Mucosa of descending colon (tissue), 3 donors: ENCODE measurements at regions of chr13 and their contacts with region 1.

Region 1: DNA sequence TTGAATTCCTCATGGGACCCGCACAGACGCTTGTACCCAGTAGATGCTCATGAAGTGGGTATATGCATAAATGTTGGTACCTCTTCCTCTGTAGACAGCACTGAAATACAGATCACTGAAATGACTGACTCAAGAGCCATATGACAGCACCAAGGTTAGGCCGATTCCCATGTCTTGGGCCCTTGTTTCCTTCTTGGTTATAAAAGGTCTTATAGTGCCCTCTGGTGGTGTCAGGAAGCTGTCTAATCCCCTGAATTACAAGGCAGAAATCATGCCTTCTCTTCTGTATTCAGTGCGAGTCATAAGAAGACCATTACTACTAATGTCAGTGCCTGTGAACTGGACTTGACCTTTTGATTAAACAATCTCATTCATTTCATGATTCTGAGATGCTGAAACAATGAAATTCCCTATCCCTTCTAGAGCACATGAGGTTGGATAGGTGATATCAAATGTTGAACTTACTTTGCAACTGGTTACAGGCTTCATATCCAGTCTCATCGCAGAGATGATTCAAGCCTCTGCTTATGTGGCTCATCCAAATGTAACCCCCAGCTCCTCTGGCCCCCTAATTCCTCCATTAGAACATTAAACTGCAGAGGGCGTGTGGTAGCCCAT is 59.7 kb downstream of the SPATA13 start:
- DNase-seq: peak in 1 of 3 donors; percentile 89
- ATAC-seq: peak; percentile 76
- H3K4me3 ChIP-seq: no peak overlapping the region
- H3K4me1 ChIP-seq: peaks cover 15% of the 10 kb centered on the region
- CTCF ChIP-seq: peak; percentile 40

Region 2: DNA sequence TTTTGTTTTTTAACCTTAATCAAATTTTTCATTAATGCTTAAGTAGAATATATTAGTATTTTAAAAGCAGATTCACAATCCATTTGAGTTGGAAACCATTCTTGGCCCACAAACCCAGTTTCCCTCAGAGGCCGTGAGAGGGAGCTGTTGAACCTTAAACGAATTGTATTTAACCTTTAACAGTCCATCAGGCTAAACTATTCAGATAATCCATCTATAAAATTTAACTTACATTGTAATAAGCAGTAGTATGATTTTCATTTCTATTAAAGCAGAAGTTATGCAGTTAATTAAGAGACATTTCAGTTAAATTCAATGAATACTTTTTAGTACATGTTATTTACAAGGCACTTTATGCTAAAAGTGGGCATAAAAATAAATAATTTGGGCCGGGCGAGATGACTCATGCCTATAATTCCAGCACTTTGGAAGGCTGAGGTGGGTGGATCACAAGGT is 199.8 kb before region 1 on chr13:
- intact Hi-C with region 1: loop called (anchors 2 to 5 kb)
- DNase-seq: peak in 2 of 3 donors; percentile 36 to 74
- ATAC-seq: peak; percentile 57
- H3K4me3 ChIP-seq: no peak overlapping the region
- H3K4me1 ChIP-seq: no peaks in the 10 kb centered on the region
- CTCF ChIP-seq: peak; percentile 31

Region 3: DNA sequence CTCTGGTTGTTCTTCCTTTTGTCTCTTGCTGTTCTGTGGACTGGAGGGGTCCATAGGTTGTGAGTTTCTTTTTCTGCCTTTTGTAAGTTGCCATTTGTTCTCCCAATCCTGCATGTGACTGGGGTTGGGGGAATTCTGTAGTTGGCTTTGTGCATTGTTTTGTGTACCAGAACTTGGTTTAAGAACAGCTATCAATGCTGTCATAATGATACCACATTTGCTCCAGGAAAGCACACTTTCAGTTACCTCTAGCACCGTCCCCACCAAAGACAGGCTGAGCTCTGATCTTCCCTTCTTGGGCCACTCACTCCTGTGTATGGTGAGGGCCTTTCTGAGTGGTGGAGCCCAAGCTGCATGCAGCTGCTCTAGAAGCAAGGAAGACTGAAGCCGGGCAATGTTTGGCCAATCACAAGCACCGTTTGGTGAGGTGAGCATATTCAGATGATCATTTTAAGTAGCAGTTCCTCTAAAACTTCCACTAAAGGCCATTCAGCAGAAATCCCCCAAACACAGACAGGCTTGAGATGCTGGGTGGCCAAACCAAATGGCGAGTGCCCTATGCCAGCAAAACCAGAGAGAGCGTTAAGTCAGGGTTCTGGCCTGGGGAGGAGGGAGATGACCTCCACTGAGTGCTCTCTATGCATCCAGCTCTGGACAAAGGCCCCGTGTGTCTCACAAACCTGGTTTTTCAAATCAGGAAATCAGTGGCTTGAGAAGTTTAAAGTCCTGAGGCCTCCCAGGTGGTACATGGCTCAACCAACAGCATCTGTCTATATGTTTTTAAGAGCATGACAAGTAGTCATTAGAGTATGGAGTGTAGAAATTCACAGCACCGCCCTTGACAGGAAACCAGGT is 180.3 kb before region 1 on chr13:
- intact Hi-C with region 1: loop called in 1 of 2 experiments (anchors 10 kb)
- DNase-seq: no peak
- ATAC-seq: no peak
- H3K4me3 ChIP-seq: no peak overlapping the region
- H3K4me1 ChIP-seq: no peaks in the 10 kb centered on the region
- CTCF ChIP-seq: no peak

Region 4: GRCh38 chr13:24053519-24054251 is 166.5 kb before region 1 on chr13:
- intact Hi-C with region 1: loop called (anchors 10 kb)
- DNase-seq: peak in 2 of 3 donors; percentile 67 to 73
- ATAC-seq: peak; percentile 95
- H3K4me3 ChIP-seq: no peak overlapping the region
- H3K4me1 ChIP-seq: no peaks in the 10 kb centered on the region
- CTCF ChIP-seq: peak; percentile 50

Region 5: DNA sequence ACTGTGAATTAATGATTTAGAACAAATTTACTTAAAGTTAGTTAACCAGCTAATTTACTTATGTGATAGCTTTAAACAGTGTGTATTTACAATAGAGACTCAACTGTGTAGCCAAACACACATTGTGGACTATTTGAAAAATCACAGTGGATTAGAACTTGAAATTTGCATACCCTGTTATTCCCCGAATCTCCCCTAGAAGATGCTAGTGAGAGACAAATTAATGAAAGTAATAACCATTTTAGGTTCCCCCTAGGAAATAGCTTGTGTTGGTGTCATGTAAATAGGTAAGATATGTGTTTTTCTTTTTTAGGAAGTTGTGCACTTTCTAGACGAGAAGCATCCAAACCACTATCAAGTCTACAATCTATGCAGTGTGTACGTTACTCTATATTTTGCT is 187.6 kb after region 1 on chr13:
- intact Hi-C with region 1: no loop called
- DNase-seq: no peak
- ATAC-seq: no peak
- H3K4me3 ChIP-seq: no peak overlapping the region
- H3K4me1 ChIP-seq: no peaks in the 10 kb centered on the region
- CTCF ChIP-seq: no peak